Naive thymus-derived CD4-positive, alpha-beta T cell (primary cell): ENCODE measurements at regions of chr3 and their contacts with region 1.

Region 1: GRCh38 chr3:15851735-15852134 is 54.0 kb upstream of the ANKRD28 start:
- DNase-seq: no peak
- ATAC-seq: no peak
- H3K4me3 ChIP-seq: no peak overlapping the region
- H3K4me3 Mint-ChIP-seq: no peak overlapping the region
- H3K27ac ChIP-seq: no peak overlapping the region
- H3K27ac Mint-ChIP-seq: no peak overlapping the region
- H3K4me1 ChIP-seq: no peaks in the 10 kb centered on the region
- H3K4me1 Mint-ChIP-seq: peaks cover 12 to 54% (median 30%) of the 10 kb centered on the region in 7 donors
- H3K27me3 ChIP-seq: no peaks in the 10 kb centered on the region
- H3K27me3 Mint-ChIP-seq: no peaks in the 10 kb centered on the region

Region 2: DNA sequence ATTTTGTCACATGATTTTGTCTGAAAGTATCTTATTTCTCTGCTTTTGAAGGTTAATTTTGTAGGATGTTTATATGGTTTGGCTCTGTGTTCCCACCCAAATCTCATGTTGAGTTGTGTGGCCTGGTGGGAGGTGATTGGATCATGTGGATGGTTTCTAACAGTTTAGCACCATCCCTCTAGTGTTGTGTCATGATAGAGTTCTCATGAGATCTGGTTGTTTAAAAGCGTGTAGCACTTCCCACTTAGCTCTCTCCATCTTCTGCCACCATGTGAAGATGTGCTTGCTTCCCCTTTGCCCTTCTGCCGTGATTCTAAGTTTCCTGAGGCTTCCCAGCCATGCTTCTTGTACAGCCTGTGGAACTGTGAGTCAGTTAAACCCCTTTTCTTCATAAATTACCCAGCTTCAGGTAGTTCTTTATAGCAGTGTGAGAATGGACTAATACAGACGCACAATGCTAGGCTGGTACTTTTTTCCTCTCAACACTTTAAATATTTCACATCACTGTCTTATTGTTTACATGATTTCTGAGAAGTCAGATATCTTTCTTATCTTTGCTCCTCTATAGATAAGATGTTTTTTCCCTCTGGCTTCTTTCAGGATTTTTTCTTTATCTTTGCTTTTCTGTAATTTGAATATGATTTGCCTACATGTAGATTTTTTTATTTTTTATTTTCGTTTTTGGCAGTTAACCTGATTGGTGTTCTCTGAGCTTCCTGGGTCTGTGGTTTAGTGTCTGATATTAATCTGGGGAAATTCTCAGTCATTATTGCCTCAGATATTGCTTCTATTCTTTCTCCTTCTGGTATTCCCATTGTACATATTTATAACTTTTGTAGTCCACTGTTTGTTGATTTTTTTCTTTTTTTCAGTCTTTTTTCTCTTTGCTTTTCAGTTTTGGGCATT is 227.9 kb before region 1 on chr3:
- CTCF ChIA-PET with region 1: no interaction called
- POLR2A ChIA-PET with region 1: no interaction called
- intact Hi-C with region 1: no loop called
- DNase-seq: peak in 5 of 9 donors; percentile 10 to 38 (median 32)
- ATAC-seq: peak; percentile 79
- H3K4me3 ChIP-seq: peak overlapping the region; percentile 58
- H3K4me3 Mint-ChIP-seq: peak overlapping the region; percentile 29 to 89 (median 76)
- H3K27ac ChIP-seq: peak overlapping the region; percentile 59
- H3K27ac Mint-ChIP-seq: peak overlapping the region; percentile 44 to 90 (median 84)
- H3K4me1 ChIP-seq: peaks cover 16 to 23% of the 10 kb centered on the region in 2 donors
- H3K4me1 Mint-ChIP-seq: peaks cover 18 to 50% (median 41%) of the 10 kb centered on the region in 7 donors
- H3K27me3 ChIP-seq: no peaks in the 10 kb centered on the region
- H3K27me3 Mint-ChIP-seq: no peaks in the 10 kb centered on the region

Region 3: GRCh38 chr3:15778332-15778858 is 73.3 kb before region 1 on chr3:
- CTCF ChIA-PET with region 1: no interaction called
- POLR2A ChIA-PET with region 1: no interaction called
- intact Hi-C with region 1: loop called in 1 of 2 experiments (anchors 2 kb)
- DNase-seq: no peak
- ATAC-seq: no peak
- H3K4me3 ChIP-seq: no peak overlapping the region
- H3K4me3 Mint-ChIP-seq: no peak overlapping the region
- H3K27ac ChIP-seq: no peak overlapping the region
- H3K27ac Mint-ChIP-seq: no peak overlapping the region
- H3K4me1 ChIP-seq: no peaks in the 10 kb centered on the region
- H3K4me1 Mint-ChIP-seq: peaks cover under 1 to 26% (median 12%) of the 10 kb centered on the region in 7 donors
- H3K27me3 ChIP-seq: no peaks in the 10 kb centered on the region
- H3K27me3 Mint-ChIP-seq: no peaks in the 10 kb centered on the region

Region 4: DNA sequence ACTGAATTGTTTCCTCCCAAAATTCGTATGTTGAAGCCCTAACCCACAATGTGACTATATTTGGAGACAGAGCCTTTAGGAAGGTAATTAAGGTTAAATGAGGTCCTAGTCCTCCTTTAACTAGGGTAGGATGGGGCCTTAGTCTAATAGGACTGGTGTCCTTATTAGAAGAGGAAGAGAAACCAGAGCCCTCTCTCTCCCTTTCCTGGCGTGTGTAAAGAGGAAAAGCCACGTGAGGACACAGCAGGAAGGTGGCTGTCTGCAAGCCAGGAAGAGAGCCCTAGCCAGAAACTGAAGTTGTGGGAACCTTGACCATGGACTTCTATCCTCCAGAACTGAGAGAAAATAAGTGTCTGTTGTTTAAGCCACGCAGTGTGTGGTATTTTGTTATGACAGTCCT is 507.6 kb after region 1 on chr3:
- CTCF ChIA-PET with region 1: no interaction called
- POLR2A ChIA-PET with region 1: no interaction called
- intact Hi-C with region 1: no loop called
- DNase-seq: no peak
- ATAC-seq: no peak
- H3K4me3 ChIP-seq: no peak overlapping the region
- H3K4me3 Mint-ChIP-seq: no peak overlapping the region
- H3K27ac ChIP-seq: no peak overlapping the region
- H3K27ac Mint-ChIP-seq: peak overlapping the region; percentile 12 to 87 (median 54)
- H3K4me1 ChIP-seq: no peaks in the 10 kb centered on the region
- H3K4me1 Mint-ChIP-seq: peaks cover 15 to 51% (median 46%) of the 10 kb centered on the region in 7 donors
- H3K27me3 ChIP-seq: no peaks in the 10 kb centered on the region
- H3K27me3 Mint-ChIP-seq: no peaks in the 10 kb centered on the region